ENCODE measurements at regions of chr7 and their contacts with region 1.

Region 1: DNA sequence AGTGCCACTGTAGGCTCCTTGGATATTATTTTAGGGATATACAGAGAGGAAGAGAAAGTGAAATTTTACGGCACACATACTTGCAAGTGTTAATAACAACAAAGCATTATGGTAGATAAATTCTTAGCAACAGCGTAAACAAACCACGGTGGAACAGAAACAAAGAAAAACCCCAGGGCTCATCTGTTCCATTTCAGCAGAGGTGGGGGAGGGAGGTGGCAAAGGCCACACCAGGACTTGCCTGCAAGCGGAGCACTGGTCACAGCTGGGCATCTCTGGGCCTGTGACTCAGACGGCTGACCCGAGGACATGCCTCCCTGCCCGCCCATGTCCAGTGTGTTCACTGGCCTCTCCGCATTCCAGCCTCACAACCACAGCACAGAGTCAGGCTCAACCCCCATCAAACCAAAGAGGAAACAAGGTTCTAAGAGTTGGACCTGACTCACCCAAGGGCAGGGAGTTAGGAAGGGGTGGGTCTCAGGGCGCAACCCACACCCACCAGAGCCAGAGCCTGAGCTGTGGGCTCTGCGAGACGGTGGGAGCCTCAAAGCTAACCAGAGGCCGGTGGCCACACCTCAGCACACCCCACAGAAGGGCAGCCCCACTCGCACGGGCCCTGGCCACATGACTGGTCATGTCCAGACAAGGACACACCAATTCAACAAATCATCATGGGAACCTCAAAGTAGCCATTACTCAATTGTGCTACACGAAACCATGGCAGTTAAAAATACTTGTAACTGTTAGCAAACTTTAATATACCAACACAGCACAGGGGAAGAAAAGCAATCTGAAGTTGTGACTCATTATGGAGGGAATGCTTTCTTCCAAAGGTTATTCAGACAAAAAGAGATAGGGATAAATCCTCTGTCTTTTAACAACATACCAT is 10.7 kb downstream of the ESYT2 start:
- DNase-seq: peak; percentile 86 to 96 (median 90)
- ATAC-seq: peak; percentile 91 to 93 (median 91)
- H3K4me3 ChIP-seq: peak overlapping the region in 10 of 12 donors; percentile 0 to 47 (median 34)
- H3K27ac ChIP-seq: peak overlapping the region; percentile 86 to 97 (median 90)
- H3K4me1 ChIP-seq: peaks cover 17 to 91% (median 79%) of the 10 kb centered on the region in 12 donors
- H3K27me3 ChIP-seq: no peaks in the 10 kb centered on the region
- CTCF ChIP-seq: peak in 1 of 12 donors; percentile 20
- POLR2A ChIP-seq: peak in 1 of 2 donors; percentile 73

Region 2: GRCh38 chr7:158704704-158705468 is 113.7 kb before region 1 on chr7 and contains the start of gene NCAPG2:
- intact Hi-C with region 1: loop called in 2 of 10 experiments (anchors 5 to 10 kb)
- DNase-seq: peak; percentile 98 to 99 (median 99)
- ATAC-seq: peak; percentile 97 to 99 (median 99)
- H3K4me3 ChIP-seq: peak within 1 kb of the TSS; percentile 68 to 98 (median 82)
- H3K27ac ChIP-seq: peak within 1 kb of the TSS; percentile 33 to 96 (median 88)
- H3K4me1 ChIP-seq: peaks cover 0 to 18% (median 8%) of the 10 kb centered on the region in 12 donors
- H3K27me3 ChIP-seq: no peaks in the 10 kb centered on the region
- CTCF ChIP-seq: peak in 10 of 12 donors; percentile 10 to 44 (median 18)
- POLR2A ChIP-seq: peak; percentile 63 to 97
- total RNA-seq, gene NCAPG2: 2.8 to 12.5 (median 4.7) TPM

Region 3: DNA sequence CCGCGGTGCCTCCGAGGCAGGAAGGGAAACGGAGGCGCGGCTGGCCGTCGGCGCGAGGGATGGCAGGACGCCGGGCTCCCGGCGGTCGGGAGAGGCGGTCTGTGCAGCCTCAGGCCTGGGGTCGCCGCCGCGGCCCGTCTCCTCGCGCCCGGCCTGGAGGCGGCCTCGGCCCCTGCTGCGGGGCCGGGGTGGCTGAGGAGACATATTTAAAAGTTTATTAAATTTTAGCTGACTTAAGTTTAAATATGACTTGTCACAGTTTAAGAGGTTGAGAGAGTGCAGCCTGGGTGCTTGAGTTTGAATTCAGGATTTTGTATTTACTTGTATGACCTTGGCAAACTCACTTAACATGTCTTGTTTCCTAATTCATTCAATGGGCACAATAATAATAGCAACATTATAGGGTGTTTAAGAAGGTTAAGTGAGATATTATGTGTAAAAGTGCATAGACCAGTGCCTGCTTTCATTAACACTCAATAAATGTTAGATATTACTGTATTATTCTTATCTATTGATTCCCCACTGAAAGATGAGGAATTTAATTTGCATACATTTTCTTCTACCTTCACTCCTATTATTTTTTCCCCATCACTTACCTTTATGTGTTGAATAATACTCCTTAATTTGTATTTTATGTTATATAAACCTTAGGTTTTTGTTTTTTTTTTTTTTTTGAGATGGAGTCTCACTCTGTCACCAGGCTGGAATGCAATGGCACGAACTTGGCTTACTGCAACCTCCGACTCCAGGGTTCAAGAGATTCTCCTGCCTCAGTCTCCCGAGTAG is 38.5 kb after region 1 on chr7:
- intact Hi-C with region 1: loop called in 2 of 10 experiments (anchors 5 kb)
- DNase-seq: no peak
- ATAC-seq: no peak
- H3K4me3 ChIP-seq: peak overlapping the region; percentile 83 to 99 (median 96)
- H3K27ac ChIP-seq: peak overlapping the region; percentile 82 to 98 (median 90)
- H3K4me1 ChIP-seq: peaks cover 11 to 51% (median 19%) of the 10 kb centered on the region in 12 donors
- H3K27me3 ChIP-seq: no peaks in the 10 kb centered on the region
- CTCF ChIP-seq: no peak
- POLR2A ChIP-seq: no peak

Region 4: DNA sequence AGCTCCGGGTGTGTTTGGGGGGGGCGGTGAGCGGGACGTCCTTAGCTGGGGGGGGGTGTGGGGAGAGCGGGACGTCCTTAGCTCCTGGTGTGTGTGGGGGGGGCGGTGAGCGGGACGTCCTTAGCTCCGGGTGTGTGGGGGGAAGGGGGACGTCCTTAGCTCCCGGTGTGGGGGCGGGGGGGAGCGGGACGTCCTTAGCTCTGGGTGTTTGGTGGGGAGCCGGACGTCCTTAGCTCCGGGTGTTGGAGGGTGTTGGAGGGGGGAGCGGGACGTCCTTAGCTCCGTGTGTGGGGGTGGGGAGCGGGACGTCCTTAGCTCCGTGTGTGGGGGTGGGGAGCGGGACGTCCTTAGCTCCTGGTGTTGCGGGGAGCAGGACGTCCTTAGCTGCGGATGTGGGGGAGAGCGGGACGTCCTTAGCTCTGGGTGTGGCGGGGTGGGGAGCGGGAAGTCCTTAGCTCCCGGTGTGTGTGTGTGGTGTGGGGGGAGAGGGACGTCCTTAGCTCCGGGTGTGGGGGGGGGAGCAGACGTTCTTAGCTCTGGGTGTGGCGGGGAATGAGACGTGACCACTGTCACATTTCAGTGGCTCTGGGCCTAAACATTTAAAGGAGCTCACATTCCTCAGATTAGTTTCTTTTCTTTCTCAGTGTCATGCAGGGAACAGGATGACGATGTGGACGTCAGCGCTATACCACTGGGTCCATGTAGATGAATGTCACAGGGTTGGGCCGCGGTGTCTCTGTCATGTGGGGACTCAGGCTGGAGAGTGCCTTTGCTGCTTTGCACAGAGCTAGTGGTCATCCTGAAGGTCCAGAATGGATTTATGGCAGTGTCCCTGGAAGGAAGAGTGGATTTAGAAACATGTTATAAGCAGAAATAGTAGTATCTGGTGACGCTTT is 45.3 kb after region 1 on chr7:
- intact Hi-C with region 1: loop called in 4 of 10 experiments (anchors 1 to 5 kb)
- DNase-seq: peak; percentile 82 to 93 (median 89)
- ATAC-seq: peak; percentile 84 to 91 (median 89)
- H3K4me3 ChIP-seq: peak overlapping the region in 11 of 12 donors; percentile 27 to 59 (median 55)
- H3K27ac ChIP-seq: peak overlapping the region; percentile 85 to 98 (median 92)
- H3K4me1 ChIP-seq: peaks cover 4 to 56% (median 30%) of the 10 kb centered on the region in 12 donors
- H3K27me3 ChIP-seq: no peaks in the 10 kb centered on the region
- CTCF ChIP-seq: no peak
- POLR2A ChIP-seq: peak in 1 of 2 donors; percentile 56

Region 5: DNA sequence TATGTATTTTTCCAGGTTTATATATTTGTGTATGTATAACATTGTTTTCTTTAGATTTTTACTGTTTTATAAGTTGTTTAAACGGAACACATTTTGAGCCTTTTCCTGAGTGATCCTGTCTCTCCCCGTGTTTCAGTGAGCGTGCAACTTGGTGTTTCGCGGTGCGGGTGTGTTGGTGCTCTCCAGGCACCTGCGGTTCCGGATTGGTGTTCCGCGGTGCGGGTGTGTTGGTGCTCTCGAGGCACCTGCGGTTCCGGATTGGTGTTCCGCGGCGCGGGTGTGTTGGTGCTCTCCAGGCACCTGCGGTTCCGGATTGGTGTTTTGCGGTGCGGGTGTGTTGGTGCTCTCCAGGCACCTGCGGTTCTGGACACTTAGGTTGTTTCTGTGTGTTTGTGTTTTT is 58.4 kb after region 1 on chr7:
- intact Hi-C with region 1: no loop called
- DNase-seq: no peak
- ATAC-seq: no peak
- H3K4me3 ChIP-seq: no peak overlapping the region
- H3K27ac ChIP-seq: no peak overlapping the region
- H3K4me1 ChIP-seq: no peaks in the 10 kb centered on the region
- H3K27me3 ChIP-seq: no peaks in the 10 kb centered on the region
- CTCF ChIP-seq: no peak
- POLR2A ChIP-seq: no peak

Measured in heart left ventricle (tissue), 16 donors.